Body of pancreas (tissue), 4 donors: ENCODE measurements at regions of chr7 and their contacts with region 1.

Region 1: DNA sequence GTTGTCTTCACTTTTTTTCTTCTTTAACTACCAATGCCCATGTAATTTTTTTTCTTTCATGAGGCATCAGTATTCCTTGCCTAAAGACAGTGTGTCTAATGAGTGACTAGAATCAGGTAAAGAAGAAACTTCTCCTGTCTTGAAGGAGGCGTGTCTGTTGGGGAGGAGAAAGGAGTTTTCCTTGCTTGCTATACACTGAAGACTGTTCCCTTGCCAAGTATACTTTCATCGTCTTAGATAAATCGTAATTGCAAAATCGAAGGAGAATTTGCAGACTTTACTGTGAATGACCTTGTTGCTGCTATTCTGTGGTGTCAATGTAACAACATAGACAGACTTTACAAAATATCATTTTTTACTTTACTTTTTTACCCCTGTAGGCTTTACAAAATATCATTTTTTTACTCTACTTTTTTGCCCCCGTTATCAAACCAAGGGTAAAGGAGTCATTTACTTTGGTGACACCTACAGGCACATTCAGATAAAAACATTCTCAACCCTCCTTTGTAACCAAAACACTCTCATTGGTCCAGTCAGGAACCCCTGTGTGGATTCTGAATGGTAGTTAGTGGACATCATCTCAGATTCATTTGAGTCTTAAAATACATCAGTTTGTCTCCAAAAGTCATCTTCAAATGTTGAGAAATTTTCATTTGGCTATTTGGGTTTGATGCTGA is 232.4 kb downstream of the AHR start:
- DNase-seq: no peak
- ATAC-seq: peak; percentile 69
- H3K4me3 ChIP-seq: no peak overlapping the region
- H3K27ac ChIP-seq: no peak overlapping the region
- H3K4me1 ChIP-seq: peaks cover 5% of the 10 kb centered on the region
- H3K27me3 ChIP-seq: no peaks in the 10 kb centered on the region
- CTCF ChIP-seq: peak in 6 of 7 experiments; percentile 14 to 51 (median 37)
- POLR2A ChIP-seq: no peak

Region 2: GRCh38 chr7:16982640-16983350 is 548.1 kb before region 1 on chr7:
- intact Hi-C with region 1: loop called (anchors 10 kb)
- DNase-seq: peak in 3 of 4 donors; percentile 35 to 43 (median 35)
- ATAC-seq: no peak
- H3K4me3 ChIP-seq: no peak overlapping the region
- H3K27ac ChIP-seq: no peak overlapping the region
- H3K4me1 ChIP-seq: no peaks in the 10 kb centered on the region
- H3K27me3 ChIP-seq: no peaks in the 10 kb centered on the region
- CTCF ChIP-seq: peak; percentile 58 to 98 (median 81)
- POLR2A ChIP-seq: no peak